Thyroid gland (tissue), 4 donors: ENCODE measurements at regions of chr15 and their contacts with region 1.

Region 1: GRCh38 chr15:67839929-67840748 is at the start of gene RNU6-1:
- DNase-seq: peak; percentile 94 to 95
- H3K4me3 ChIP-seq: peak within 1 kb of the TSS; percentile 55 to 87 (median 60)
- H3K27ac ChIP-seq: peak within 1 kb of the TSS; percentile 98 to 100 (median 100)
- H3K4me1 ChIP-seq: peaks cover 37 to 64% of the 10 kb centered on the region in 2 donors
- H3K27me3 ChIP-seq: no peaks in the 10 kb centered on the region
- CTCF ChIP-seq: no peak
- POLR2A ChIP-seq: peak in 1 of 2 donors; percentile 93
- total RNA-seq, gene RNU6-1: not detected

Region 2: DNA sequence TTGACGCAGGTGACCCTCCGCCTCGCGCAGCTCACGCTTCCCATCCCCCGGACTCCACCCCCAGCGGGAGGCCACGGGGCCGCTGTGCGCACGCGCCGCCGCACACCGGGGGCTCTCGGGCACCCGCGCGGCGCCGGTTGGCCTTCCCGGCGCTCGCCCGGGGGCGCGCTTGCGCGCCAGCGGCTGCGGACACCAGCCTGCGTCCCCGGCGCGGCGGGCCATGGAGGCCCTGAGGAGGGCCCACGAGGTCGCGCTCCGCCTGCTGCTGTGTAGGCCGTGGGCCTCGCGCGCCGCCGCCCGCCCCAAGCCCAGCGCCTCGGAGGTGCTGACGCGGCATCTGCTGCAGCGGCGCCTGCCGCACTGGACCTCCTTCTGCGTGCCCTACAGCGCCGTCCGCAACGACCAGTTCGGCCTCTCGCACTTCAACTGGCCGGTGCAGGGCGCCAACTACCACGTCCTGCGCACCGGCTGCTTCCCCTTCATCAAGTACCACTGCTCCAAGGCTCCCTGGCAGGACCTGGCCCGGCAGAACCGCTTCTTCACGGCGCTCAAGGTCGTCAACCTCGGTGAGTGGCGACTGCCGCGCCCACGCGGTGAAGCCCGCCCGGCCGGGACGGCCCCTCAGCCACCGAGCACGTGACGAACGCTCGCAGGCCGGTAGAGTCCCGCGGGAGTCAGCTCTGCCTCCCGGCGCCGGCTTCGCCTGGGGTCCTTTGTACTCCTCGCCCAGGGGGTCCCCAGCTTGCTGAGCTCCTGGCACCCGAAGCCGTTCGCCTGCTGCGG is 318.9 kb before region 1 on chr15 and contains the start of gene C15orf61:
- intact Hi-C with region 1: loop called (anchors 5 kb)
- DNase-seq: peak; percentile 93 to 95
- H3K4me3 ChIP-seq: peak within 1 kb of the TSS; percentile 32 to 75 (median 71)
- H3K27ac ChIP-seq: peak within 1 kb of the TSS; percentile 94 to 99 (median 99)
- H3K4me1 ChIP-seq: peaks cover 17 to 20% of the 10 kb centered on the region in 2 donors
- H3K27me3 ChIP-seq: no peaks in the 10 kb centered on the region
- CTCF ChIP-seq: no peak
- POLR2A ChIP-seq: peak; percentile 62 to 85
- total RNA-seq, gene C15orf61: 2.8 to 14.9 (median 7.9) TPM

Region 3: GRCh38 chr15:67906382-67906781 is 66.2 kb after region 1 on chr15:
- intact Hi-C with region 1: no loop called
- DNase-seq: no peak
- H3K4me3 ChIP-seq: no peak overlapping the region
- H3K27ac ChIP-seq: no peak overlapping the region
- H3K4me1 ChIP-seq: no peaks in the 10 kb centered on the region
- H3K27me3 ChIP-seq: no peaks in the 10 kb centered on the region
- CTCF ChIP-seq: no peak
- POLR2A ChIP-seq: no peak